K562 (cell line): ENCODE measurements at regions of chr14 and their contacts with region 1.

Region 1: DNA sequence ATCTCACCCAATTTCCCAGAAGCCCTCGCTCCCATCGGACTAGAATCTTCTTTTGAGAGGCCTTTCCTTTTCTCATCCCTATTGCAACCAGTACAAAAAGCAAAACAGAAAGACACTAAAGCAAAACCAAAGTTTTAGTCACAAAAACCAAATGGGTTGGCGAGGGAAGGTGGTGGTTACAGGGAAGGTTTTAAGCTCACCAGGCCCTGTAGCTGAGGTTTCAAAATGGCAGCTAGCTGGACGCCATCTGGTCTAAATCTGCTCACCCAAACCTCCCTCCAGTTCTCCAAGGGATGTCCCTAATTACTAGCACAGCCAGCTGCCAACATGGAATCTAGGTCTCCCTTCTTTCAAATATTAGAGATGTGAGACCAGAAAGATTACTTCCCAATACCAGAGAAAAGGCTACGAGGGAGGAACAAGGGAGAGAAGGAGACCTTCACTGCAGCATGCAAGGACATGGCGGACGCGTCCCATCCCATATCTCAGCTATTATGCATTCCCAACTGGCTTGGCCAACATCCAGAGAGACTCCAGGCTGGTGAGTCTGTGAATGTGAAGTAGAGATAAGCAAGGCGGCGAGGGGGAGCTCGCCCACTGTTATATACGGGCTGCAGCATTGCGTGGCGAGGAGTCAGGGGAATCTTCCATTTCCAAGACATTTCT is 70.8 kb downstream of the DPF3 start:
- DNase-seq: peak; percentile 47 to 91 (median 68)
- ATAC-seq: peak; percentile 77
- H3K4me3 ChIP-seq: no peak overlapping the region
- H3K27ac ChIP-seq: peak overlapping the region; percentile 60; the same call in 2 of the 3 replicates
- H3K4me1 ChIP-seq: peaks cover 14 to 31% of the 10 kb centered on the region in 2 experiments; a peak in 3 of 5 replicates
- H3K27me3 ChIP-seq: no peaks in the 10 kb centered on the region; a peak in 1 of 5 replicates
- CTCF ChIP-seq: peak in 1 of 3 experiments; percentile 22; a peak in 2 of 6 replicates
- EP300 ChIP-seq: peak; percentile 82
- POLR2A ChIP-seq: no peak
- RAD21 ChIP-seq: peak in 1 of 2 experiments; percentile 48; a peak in 2 of 4 replicates

Region 2: GRCh38 chr14:72745991-72746980 is 76.8 kb before region 1 on chr14:
- CTCF ChIA-PET with region 1: no interaction called
- POLR2A ChIA-PET with region 1: no interaction called
- in situ Hi-C with region 1: no loop called
- intact Hi-C with region 1: loop called (anchors 10 kb)
- DNase-seq: no peak
- ATAC-seq: no peak
- H3K4me3 ChIP-seq: no peak overlapping the region
- H3K27ac ChIP-seq: no peak overlapping the region
- H3K4me1 ChIP-seq: peaks cover 14 to 16% of the 10 kb centered on the region in 2 experiments; a peak in 4 of 5 replicates
- H3K27me3 ChIP-seq: no peaks in the 10 kb centered on the region
- CTCF ChIP-seq: 0 out of 6 replicates have a peak, but pooled peaks of 1 of the 3 experiments have one; percentile 7
- EP300 ChIP-seq: no peak
- POLR2A ChIP-seq: no peak
- RAD21 ChIP-seq: peak in 1 of 2 experiments; percentile 8; a peak in 1 of 4 replicates

Region 3: GRCh38 chr14:72792051-72792788 is 30.9 kb before region 1 on chr14:
- CTCF ChIA-PET with region 1: no interaction called
- POLR2A ChIA-PET with region 1: no interaction called
- in situ Hi-C with region 1: no loop called
- intact Hi-C with region 1: no loop called
- DNase-seq: no peak
- ATAC-seq: no peak; the same call in 2 of the 3 replicates
- H3K4me3 ChIP-seq: no peak overlapping the region
- H3K27ac ChIP-seq: no peak overlapping the region
- H3K4me1 ChIP-seq: peaks cover 0 to 2% of the 10 kb centered on the region in 2 experiments; a peak in 2 of 5 replicates
- H3K27me3 ChIP-seq: peaks cover 0 to 10% of the 10 kb centered on the region in 2 experiments; a peak in 2 of 5 replicates
- CTCF ChIP-seq: no peak
- EP300 ChIP-seq: no peak
- POLR2A ChIP-seq: no peak
- RAD21 ChIP-seq: no peak